ENCODE measurements at regions of chr19 and their contacts with region 1.

Region 1: GRCh38 chr19:47247329-47247886 is 8.9 kb upstream of the CCDC9 start:
- DNase-seq: peak; percentile 68 to 87
- H3K4me3 ChIP-seq: no peak overlapping the region
- H3K27ac ChIP-seq: peak overlapping the region in 1 of 2 donors; percentile 49
- H3K4me1 ChIP-seq: peaks cover 0 to 23% (median 14%) of the 10 kb centered on the region in 4 donors
- H3K27me3 ChIP-seq: no peaks in the 10 kb centered on the region
- CTCF ChIP-seq: peak; percentile 90 to 92

Region 2: GRCh38 chr19:47145639-47146486 is 101.5 kb before region 1 on chr19:
- intact Hi-C with region 1: loop called (anchors 5 kb)
- DNase-seq: no peak
- H3K4me3 ChIP-seq: no peak overlapping the region
- H3K27ac ChIP-seq: no peak overlapping the region
- H3K4me1 ChIP-seq: no peaks in the 10 kb centered on the region
- H3K27me3 ChIP-seq: no peaks in the 10 kb centered on the region
- CTCF ChIP-seq: no peak

Region 3: DNA sequence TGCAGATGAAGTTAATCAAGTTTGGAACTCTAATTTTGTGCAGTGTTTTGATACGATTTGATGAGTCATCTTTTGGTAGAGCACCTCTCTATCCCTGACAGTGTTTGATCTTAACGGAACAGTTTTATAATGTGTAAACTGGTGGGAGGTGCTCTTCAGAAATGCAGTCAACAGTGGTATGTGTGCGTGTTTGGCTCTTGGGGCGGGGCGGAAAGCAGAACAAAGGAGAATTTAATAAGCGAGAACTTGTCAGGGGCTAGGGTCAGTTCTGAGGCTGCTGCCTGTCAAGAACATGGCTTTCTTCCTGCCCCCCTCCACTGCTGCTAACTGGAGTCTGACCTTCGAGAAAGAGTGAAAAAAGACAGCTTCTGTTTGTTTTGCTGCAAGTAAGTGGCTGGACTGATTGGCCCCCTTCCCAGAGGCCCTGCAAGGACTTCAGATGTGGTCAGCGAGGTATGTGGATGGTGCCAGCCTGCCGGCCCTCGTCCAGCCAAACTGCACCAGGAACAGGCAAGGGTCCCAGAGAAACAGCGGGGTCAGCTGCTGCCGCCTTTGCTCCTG is 57.2 kb before region 1 on chr19:
- intact Hi-C with region 1: no loop called
- DNase-seq: peak; percentile 65 to 93
- H3K4me3 ChIP-seq: peak overlapping the region; percentile 15 to 31
- H3K27ac ChIP-seq: peak overlapping the region; percentile 72 to 75
- H3K4me1 ChIP-seq: peaks cover 0 to 34% (median 26%) of the 10 kb centered on the region in 4 donors
- H3K27me3 ChIP-seq: no peaks in the 10 kb centered on the region
- CTCF ChIP-seq: no peak

Region 4: DNA sequence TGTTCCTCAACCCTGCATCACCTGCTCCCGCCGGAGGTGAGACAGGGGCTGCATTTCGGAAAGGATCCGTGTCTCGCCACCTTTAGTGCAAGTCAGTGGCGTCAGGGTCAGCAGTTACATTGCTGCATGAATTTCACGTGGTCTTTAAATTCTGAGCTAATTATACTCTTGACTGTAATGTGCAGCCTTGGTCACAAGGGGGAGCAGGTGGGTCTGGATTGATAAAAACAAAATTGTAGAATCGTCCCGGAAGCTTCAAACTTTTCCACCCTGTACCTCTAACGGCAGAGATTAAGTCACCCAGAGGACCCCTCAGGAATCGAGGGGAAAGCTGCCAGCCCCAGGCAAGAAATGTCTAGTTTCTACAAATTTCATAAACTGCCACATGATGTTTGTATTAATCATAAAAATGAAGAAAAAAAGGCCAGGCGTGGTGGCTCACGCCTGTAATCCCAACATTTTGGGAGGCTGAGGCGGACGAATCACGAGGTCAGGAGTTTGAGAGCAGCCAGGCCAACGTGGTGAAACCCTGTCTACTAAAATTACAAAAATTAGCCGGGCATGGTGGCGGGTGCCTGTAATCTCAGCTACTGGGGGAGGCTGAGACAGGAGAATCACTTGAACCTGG is 36.6 kb before region 1 on chr19:
- intact Hi-C with region 1: loop called (anchors 5 kb)
- DNase-seq: peak; percentile 85 to 92
- H3K4me3 ChIP-seq: no peak overlapping the region
- H3K27ac ChIP-seq: peak overlapping the region; percentile 51 to 52
- H3K4me1 ChIP-seq: peaks cover 0 to 6% (median 1%) of the 10 kb centered on the region in 4 donors
- H3K27me3 ChIP-seq: no peaks in the 10 kb centered on the region
- CTCF ChIP-seq: peak; percentile 79 to 93

Measured in tibial artery (tissue), 4 donors.